ENCODE measurements at regions of chr1 and their contacts with region 1.

Region 1: DNA sequence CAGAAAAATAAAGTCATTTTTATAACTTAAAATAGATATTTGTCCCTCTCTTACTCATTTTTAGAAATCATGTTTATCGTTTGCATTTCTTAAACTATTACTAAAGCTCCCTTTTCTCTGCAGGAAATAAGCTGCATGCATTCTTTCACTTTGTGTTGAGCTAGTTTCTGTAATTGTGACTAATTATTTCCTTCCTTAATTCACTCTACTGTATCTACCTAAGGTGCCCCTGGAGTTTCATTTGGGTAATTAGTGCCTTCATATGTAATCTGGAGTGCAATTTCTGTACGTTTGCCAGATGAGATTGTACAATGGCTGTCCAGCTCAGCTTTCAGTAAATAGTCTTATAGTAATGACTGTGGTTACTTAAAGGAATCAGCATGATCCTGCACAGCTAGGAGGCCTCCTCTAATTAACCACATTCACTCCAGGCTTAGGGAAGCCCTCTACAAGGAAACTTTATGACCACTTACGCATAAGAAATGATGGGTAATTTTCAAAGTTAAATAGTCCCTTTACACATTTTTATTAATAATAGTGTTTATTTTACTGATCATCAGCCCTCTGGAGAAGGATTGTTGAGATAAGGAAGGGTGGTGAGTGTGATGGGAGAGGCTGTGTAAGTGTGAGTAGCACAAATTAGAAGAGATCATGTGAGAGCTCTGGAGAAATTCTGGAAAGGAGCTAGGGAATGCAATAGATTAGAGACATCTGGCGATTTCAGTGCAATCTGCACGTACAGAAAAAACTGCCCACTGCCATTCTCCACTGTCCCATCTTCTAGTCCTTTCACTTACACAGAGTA is 86.8 kb downstream of the LRRC8C start:
- DNase-seq: peak; percentile 98
- H3K4me3 ChIP-seq: peak overlapping the region; percentile 9
- H3K27ac ChIP-seq: peak overlapping the region; percentile 68
- H3K4me1 ChIP-seq: peaks cover 63% of the 10 kb centered on the region
- H3K27me3 ChIP-seq: no peaks in the 10 kb centered on the region
- CTCF ChIP-seq: no peak; the same call in 1 of the 2 replicates

Region 2: DNA sequence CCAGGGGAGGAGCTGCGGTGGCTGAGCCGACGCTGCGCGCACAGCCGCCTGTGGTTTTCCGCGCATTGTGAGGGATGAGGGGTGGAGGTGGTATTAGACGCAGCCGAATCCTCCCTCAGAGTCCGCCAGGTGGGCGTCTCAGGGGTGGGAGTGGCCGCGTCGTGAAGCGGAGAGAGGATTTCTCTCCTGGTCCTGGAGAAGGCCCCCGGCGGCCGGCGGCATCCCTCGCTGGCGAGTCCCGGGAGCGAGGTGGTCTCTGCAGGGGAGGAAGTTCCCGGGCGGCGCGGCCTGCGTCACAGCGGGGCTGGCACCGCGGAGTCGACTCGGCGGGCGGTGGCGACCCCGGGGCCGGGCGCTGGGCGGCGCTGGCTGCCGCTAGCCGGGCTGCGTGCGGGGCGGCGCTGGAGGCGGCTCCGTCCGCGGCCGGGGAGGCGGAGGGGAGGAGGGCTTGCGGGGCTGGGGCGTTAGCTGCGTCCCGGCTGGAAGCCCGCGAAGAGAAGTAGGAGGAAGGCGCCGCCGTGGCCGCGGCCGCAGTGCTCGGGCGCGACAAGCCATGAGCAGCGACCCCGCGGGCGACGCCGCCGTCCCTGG is 87.0 kb before region 1 on chr1 and contains the start of gene LRRC8C:
- CTCF ChIA-PET with region 1: no interaction called
- POLR2A ChIA-PET with region 1: no interaction called
- intact Hi-C with region 1: loop called (anchors 5 kb)
- DNase-seq: peak; percentile 89
- H3K4me3 ChIP-seq: peak within 1 kb of the TSS; percentile 94
- H3K27ac ChIP-seq: peak within 1 kb of the TSS; percentile 79
- H3K4me1 ChIP-seq: peaks cover 8% of the 10 kb centered on the region
- H3K27me3 ChIP-seq: no peaks in the 10 kb centered on the region
- CTCF ChIP-seq: no peak; the same call in 1 of the 2 replicates
- total RNA-seq, gene LRRC8C: 5.6 and 6.9 TPM in 2 replicates

Region 3: DNA sequence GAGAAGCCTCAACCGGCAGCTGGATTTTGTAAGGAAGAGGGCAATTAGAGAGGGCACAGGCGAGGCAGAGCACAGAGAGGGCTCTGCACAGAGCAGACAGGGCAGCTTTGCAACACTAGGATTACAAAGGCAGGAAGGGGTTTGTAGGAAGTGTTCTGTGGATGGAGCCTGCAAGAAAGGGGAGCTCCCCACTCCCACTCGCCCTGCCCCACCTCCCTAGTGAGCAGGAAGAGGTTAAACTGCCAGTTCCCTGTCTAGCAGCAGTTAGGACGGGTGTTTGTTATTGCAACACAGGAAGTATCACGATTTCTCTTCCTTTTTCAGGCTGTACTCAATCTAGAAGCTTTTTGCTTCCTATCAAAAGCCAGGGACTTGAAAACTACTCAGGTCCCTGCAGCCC is 37.8 kb after region 1 on chr1:
- CTCF ChIA-PET with region 1: interaction called, 8 read pairs
- POLR2A ChIA-PET with region 1: no interaction called
- intact Hi-C with region 1: loop called (anchors 5 kb)
- DNase-seq: peak; percentile 80
- H3K4me3 ChIP-seq: peak overlapping the region; percentile 9
- H3K27ac ChIP-seq: no peak overlapping the region
- H3K4me1 ChIP-seq: peaks cover 55% of the 10 kb centered on the region
- H3K27me3 ChIP-seq: no peaks in the 10 kb centered on the region
- CTCF ChIP-seq: no peak